IMR-90 (cell line): ENCODE measurements at regions of chr4 and their contacts with region 1.

Region 1: GRCh38 chr4:146029939-146030710 is 91.5 kb upstream of the ZNF827 start:
- DNase-seq: no peak
- ATAC-seq: no peak
- H3K4me3 ChIP-seq: no peak overlapping the region
- H3K27ac ChIP-seq: no peak overlapping the region
- H3K4me1 ChIP-seq: no peaks in the 10 kb centered on the region
- H3K27me3 ChIP-seq: no peaks in the 10 kb centered on the region
- CTCF ChIP-seq: no peak
- POLR2A ChIP-seq: no peak
- RAD21 ChIP-seq: no peak

Region 2: GRCh38 chr4:146222313-146222712 is 192.2 kb after region 1 on chr4:
- CTCF ChIA-PET with region 1: no interaction called
- POLR2A ChIA-PET with region 1: no interaction called
- dilution Hi-C with region 1: no loop called
- in situ Hi-C with region 1: no loop called
- intact Hi-C with region 1: loop called (anchors 5 kb)
- DNase-seq: peak; percentile 54
- ATAC-seq: peak; percentile 35
- H3K4me3 ChIP-seq: no peak overlapping the region; the same call in 1 of the 2 replicates
- H3K27ac ChIP-seq: no peak overlapping the region
- H3K4me1 ChIP-seq: no peaks in the 10 kb centered on the region
- H3K27me3 ChIP-seq: no peaks in the 10 kb centered on the region; the same call in 1 of the 2 replicates
- CTCF ChIP-seq: no peak
- POLR2A ChIP-seq: no peak
- RAD21 ChIP-seq: no peak

Region 3: DNA sequence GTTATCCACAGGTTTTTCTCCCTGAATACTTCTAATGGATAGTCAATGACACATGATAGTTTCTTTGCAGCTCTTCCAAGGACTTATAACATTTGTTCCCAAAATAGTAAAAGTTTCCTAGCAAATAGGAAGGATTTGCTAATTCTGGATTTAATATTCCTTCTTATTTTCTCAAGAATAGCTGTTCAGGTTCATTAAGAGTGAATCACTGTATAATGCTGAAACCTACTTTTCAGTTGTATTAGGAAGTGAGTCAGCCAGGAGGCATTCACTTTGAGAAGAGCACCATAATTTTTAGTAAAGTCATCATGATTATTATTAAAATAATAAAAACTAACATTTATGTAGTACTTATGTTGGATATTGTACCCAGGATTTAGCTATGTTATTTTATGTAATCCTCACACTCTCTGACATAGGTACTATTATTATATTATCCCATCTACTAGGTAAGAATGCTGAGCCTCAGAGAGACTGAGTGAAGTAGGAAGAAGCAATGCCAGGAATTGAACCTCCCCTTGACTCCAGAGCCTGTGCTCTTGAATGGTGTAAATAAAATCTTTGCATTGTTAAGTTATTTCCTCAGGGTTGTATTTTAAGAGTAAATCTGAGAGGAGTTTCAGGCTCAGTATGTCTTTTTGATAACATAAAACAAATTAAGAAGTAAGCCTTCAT is 299.1 kb after region 1 on chr4:
- CTCF ChIA-PET with region 1: no interaction called
- POLR2A ChIA-PET with region 1: no interaction called
- dilution Hi-C with region 1: no loop called
- in situ Hi-C with region 1: no loop called
- intact Hi-C with region 1: no loop called
- DNase-seq: peak; percentile 90
- ATAC-seq: peak; percentile 73
- H3K4me3 ChIP-seq: no peak overlapping the region
- H3K27ac ChIP-seq: peak overlapping the region; percentile 89
- H3K4me1 ChIP-seq: peaks cover 8% of the 10 kb centered on the region
- H3K27me3 ChIP-seq: no peaks in the 10 kb centered on the region
- CTCF ChIP-seq: no peak
- POLR2A ChIP-seq: no peak
- RAD21 ChIP-seq: no peak